Activated CD8-positive, alpha-beta T cell treated with anti-CD3 and anti-CD28 coated beads, Interleukin-2, amount 10 ng/mL, durations not matched to agents 7 days and 5 days (primary cell): ENCODE measurements at regions of chr17 and their contacts with region 1.

Region 1: GRCh38 chr17:78082988-78083387 is 45.6 kb downstream of the TMC6 start:
- DNase-seq: no peak
- ATAC-seq: no peak
- H3K4me3 Mint-ChIP-seq: no peak overlapping the region
- H3K27ac Mint-ChIP-seq: no peak overlapping the region
- H3K4me1 Mint-ChIP-seq: peaks cover 5% of the 10 kb centered on the region
- H3K27me3 Mint-ChIP-seq: no peaks in the 10 kb centered on the region

Region 2: DNA sequence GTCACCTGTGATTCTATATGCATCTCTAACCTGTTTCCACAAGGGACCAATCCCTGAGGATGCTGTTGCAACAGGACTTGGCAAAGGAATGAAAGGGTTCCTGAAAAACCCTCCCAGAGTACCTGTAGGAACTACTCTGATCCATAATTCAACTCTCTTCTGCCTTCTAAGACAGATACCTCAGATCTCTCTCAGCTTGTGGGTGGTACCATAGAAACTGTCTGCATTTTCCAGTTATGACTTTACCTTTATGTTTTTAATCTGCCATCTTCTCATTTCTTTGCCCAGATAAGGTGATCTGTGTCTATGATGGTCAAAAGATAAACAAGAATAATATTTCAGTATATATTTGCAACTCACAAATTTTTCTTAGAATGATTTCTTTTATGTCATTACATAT is 19.5 kb before region 1 on chr17:
- CTCF ChIA-PET with region 1: interaction called, 10 read pairs
- POLR2A ChIA-PET with region 1: no interaction called
- DNase-seq: no peak
- ATAC-seq: no peak
- H3K4me3 Mint-ChIP-seq: no peak overlapping the region
- H3K27ac Mint-ChIP-seq: no peak overlapping the region
- H3K4me1 Mint-ChIP-seq: no peaks in the 10 kb centered on the region
- H3K27me3 Mint-ChIP-seq: no peaks in the 10 kb centered on the region

Region 3: GRCh38 chr17:78069695-78070094 is 13.3 kb before region 1 on chr17:
- CTCF ChIA-PET with region 1: interaction called, 12 read pairs
- POLR2A ChIA-PET with region 1: no interaction called
- DNase-seq: no peak
- ATAC-seq: no peak
- H3K4me3 Mint-ChIP-seq: no peak overlapping the region
- H3K27ac Mint-ChIP-seq: no peak overlapping the region
- H3K4me1 Mint-ChIP-seq: no peaks in the 10 kb centered on the region
- H3K27me3 Mint-ChIP-seq: no peaks in the 10 kb centered on the region

Region 4: DNA sequence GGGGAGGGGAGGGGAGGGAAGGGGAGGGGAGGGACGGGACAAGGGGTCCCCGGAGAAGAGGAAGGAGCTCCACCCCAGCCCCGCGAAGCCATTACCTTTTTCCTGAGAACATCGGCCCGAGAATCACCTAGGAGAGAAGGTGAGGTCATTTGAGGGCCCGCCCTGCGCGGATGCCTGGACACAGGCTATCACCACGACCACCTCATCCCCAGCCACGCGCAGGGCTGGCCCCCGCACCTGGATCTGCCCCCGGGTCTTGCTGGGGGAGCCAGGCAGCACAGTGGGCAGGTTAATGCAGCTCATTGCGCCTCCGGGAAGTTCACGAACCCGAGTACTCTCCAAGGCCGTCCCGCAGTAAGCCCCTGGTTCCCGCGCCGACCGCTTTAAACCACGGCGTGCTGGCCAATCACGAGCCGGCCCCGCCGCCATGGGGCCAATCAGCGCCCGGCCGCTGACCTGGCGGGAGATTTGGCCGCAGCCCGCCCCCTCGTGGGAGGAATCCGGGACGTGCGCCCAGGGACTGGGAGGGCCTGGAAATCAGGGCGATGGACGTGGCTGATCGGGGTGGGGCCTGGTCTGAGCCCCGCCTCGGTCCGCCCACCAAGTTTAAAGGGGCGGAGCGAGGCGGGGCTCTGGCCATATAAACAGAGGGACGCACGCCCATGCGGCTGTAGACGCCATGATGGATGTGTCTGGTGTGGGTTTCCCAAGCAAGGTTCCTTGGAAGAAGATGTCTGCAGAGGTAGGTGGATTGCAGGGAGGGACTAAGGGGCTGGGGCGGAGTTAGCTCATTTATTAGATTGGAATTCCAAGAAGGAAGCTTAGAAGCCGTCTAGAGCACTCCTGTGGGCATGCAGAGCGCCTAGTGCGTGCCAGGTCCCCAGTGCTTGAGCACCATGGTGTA is 104.0 kb after region 1 on chr17 and contains the starts of genes AFMID and TK1:
- CTCF ChIA-PET with region 1: interaction called, 11 read pairs
- POLR2A ChIA-PET with region 1: no interaction called
- DNase-seq: peak; percentile 95
- ATAC-seq: peak; percentile 96
- H3K4me3 Mint-ChIP-seq: peak within 1 kb of the TSS; percentile 80
- H3K27ac Mint-ChIP-seq: peak within 1 kb of the TSS; percentile 70
- H3K4me1 Mint-ChIP-seq: peaks cover 45% of the 10 kb centered on the region
- H3K27me3 Mint-ChIP-seq: no peaks in the 10 kb centered on the region
- total RNA-seq, gene AFMID: 17.7 to 20.7 TPM
- total RNA-seq, gene TK1: 139 to 142 TPM

Region 5: GRCh38 chr17:78206298-78206697 is 123.3 kb after region 1 on chr17:
- CTCF ChIA-PET with region 1: no interaction called
- POLR2A ChIA-PET with region 1: no interaction called
- DNase-seq: no peak
- ATAC-seq: no peak
- H3K4me3 Mint-ChIP-seq: no peak overlapping the region
- H3K27ac Mint-ChIP-seq: no peak overlapping the region
- H3K4me1 Mint-ChIP-seq: no peaks in the 10 kb centered on the region
- H3K27me3 Mint-ChIP-seq: no peaks in the 10 kb centered on the region